ENCODE measurements at regions of chr14 and their contacts with region 1.

Region 1: GRCh38 chr14:105602799-105603793 is 76.7 kb downstream of the TMEM121 start:
- DNase-seq: no peak
- CTCF ChIP-seq: no peak

Region 2: GRCh38 chr14:105659960-105660476 is 56.9 kb after region 1 on chr14:
- in situ Hi-C with region 1: loop called (anchors 10 kb)
- DNase-seq: no peak
- CTCF ChIP-seq: no peak